CD4-positive, alpha-beta memory T cell (primary cell): ENCODE measurements at regions of chr14 and their contacts with region 1.

Region 1: GRCh38 chr14:93231129-93231979 is 24.3 kb downstream of the UBR7 start:
- DNase-seq: no peak
- H3K4me3 ChIP-seq: no peak overlapping the region
- H3K4me3 Mint-ChIP-seq: peak overlapping the region; percentile 24 to 75 (median 68)
- H3K27ac ChIP-seq: no peak overlapping the region
- H3K27ac Mint-ChIP-seq: peak overlapping the region in 3 of 7 donors; percentile 4 to 36 (median 22)
- H3K4me1 ChIP-seq: peaks cover 10% of the 10 kb centered on the region
- H3K4me1 Mint-ChIP-seq: peaks cover 11 to 28% (median 15%) of the 10 kb centered on the region in 4 donors
- H3K27me3 ChIP-seq: no peaks in the 10 kb centered on the region
- H3K27me3 Mint-ChIP-seq: peaks cover 0 to 7% of the 10 kb centered on the region in 2 donors

Region 2: DNA sequence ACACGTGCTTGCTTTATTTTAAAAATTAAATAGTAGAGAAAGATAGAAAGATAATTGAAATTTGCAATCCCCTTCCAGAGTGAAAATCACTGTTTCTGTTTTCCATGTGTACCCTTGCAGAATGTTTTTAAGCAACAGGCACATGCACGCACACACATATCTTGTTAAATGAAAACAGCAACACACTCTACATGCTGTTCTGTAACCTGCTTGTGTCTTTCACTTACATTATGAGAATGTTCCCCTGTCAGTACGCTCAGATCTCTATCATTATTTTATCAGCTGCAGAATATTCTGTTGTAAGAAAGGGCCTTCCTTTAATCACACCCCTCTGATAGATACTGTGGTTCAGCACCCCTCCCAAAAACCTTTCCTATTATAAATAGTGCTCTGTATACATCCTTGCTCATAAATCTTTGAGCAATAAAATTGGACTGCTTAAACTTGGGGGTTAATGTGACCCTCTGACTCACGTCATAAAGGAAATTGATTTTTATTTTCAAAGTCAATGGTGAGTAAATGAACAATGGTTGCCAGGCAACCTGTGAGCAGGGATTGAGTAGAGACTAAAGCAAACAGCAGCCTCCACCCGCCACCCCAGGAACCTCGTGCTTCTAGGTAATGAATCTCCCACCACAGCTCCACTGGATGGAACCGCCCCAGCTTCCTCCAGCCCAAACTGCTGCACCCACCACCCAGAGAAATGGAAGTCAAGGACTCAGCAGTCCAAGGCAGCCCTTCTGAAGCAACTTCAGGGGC is 340.3 kb before region 1 on chr14:
- CTCF ChIA-PET with region 1: no interaction called
- POLR2A ChIA-PET with region 1: no interaction called
- intact Hi-C with region 1: no loop called
- DNase-seq: peak in 2 of 5 donors; percentile 3 to 49
- H3K4me3 ChIP-seq: no peak overlapping the region
- H3K4me3 Mint-ChIP-seq: no peak overlapping the region
- H3K27ac ChIP-seq: no peak overlapping the region
- H3K27ac Mint-ChIP-seq: peak overlapping the region in 2 of 7 donors; percentile 2 to 34
- H3K4me1 ChIP-seq: peaks cover 10% of the 10 kb centered on the region
- H3K4me1 Mint-ChIP-seq: peaks cover 2 to 10% (median 5%) of the 10 kb centered on the region in 4 donors
- H3K27me3 ChIP-seq: no peaks in the 10 kb centered on the region
- H3K27me3 Mint-ChIP-seq: peaks cover 3 to 7% of the 10 kb centered on the region in 2 donors

Region 3: GRCh38 chr14:93105362-93105761 is 126.0 kb before region 1 on chr14:
- CTCF ChIA-PET with region 1: no interaction called
- POLR2A ChIA-PET with region 1: no interaction called
- intact Hi-C with region 1: no loop called
- DNase-seq: no peak
- H3K4me3 ChIP-seq: no peak overlapping the region
- H3K4me3 Mint-ChIP-seq: no peak overlapping the region
- H3K27ac ChIP-seq: no peak overlapping the region
- H3K27ac Mint-ChIP-seq: peak overlapping the region in 2 of 7 donors; percentile 71 to 90
- H3K4me1 ChIP-seq: peaks cover 19% of the 10 kb centered on the region
- H3K4me1 Mint-ChIP-seq: peaks cover 9 to 49% (median 23%) of the 10 kb centered on the region in 4 donors
- H3K27me3 ChIP-seq: no peaks in the 10 kb centered on the region
- H3K27me3 Mint-ChIP-seq: no peaks in the 10 kb centered on the region

Region 4: DNA sequence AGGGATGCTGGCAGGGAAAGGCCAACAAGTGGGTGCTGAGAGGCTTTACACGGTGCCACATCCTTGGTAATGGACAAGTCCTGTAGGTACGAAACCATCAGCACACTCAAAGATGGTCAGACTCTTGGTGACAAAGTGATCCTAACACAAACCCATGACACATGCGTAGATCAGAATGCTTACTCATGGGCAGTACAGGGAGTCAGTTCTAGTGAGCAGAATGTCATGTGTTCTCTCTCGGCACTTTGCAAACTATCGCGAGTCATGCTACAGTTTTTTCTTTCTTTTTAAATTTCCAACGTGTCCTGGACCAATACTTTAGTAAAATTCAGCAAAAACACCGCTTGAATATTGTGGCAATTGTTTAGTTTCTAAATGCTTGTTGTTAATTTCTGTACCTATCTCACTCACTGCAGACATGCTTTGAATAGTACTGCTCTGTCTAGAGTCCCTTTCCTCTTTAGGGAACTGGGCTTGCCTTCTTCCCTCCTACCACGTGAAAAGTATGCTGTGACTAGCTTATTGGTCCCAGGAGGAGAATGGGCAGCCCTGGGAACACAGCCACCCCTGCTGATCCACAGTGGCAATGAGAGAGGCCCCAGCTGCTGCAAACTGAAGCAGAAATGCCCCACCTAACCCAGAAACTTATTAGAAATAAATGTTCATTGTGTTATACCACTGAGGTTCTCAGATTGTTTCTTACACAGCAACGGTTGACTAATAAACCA is 38.2 kb after region 1 on chr14:
- CTCF ChIA-PET with region 1: no interaction called
- POLR2A ChIA-PET with region 1: no interaction called
- intact Hi-C with region 1: no loop called
- DNase-seq: no peak
- H3K4me3 ChIP-seq: no peak overlapping the region
- H3K4me3 Mint-ChIP-seq: no peak overlapping the region
- H3K27ac ChIP-seq: no peak overlapping the region
- H3K27ac Mint-ChIP-seq: no peak overlapping the region
- H3K4me1 ChIP-seq: no peaks in the 10 kb centered on the region
- H3K4me1 Mint-ChIP-seq: peaks cover 10 to 26% (median 17%) of the 10 kb centered on the region in 4 donors
- H3K27me3 ChIP-seq: no peaks in the 10 kb centered on the region
- H3K27me3 Mint-ChIP-seq: no peaks in the 10 kb centered on the region

Region 5: GRCh38 chr14:93892923-93893558 is 661.7 kb after region 1 on chr14:
- CTCF ChIA-PET with region 1: no interaction called
- POLR2A ChIA-PET with region 1: no interaction called
- intact Hi-C with region 1: loop called (anchors 10 kb)
- DNase-seq: peak in 4 of 5 donors; percentile 44 to 58 (median 48)
- H3K4me3 ChIP-seq: no peak overlapping the region
- H3K4me3 Mint-ChIP-seq: no peak overlapping the region
- H3K27ac ChIP-seq: no peak overlapping the region
- H3K27ac Mint-ChIP-seq: no peak overlapping the region
- H3K4me1 ChIP-seq: no peaks in the 10 kb centered on the region
- H3K4me1 Mint-ChIP-seq: no peaks in the 10 kb centered on the region
- H3K27me3 ChIP-seq: no peaks in the 10 kb centered on the region
- H3K27me3 Mint-ChIP-seq: peaks cover 14 to 18% of the 10 kb centered on the region in 2 donors